Right cardiac atrium (tissue), 5 donors: ENCODE measurements at regions of chr14 and their contacts with region 1.

Region 1: GRCh38 chr14:73295198-73295796 is 58.0 kb downstream of the PAPLN start:
- DNase-seq: no peak
- ATAC-seq: peak; percentile 31 to 37
- H3K4me3 ChIP-seq: no peak overlapping the region
- H3K27ac ChIP-seq: no peak overlapping the region
- H3K4me1 ChIP-seq: peaks cover 3% of the 10 kb centered on the region
- H3K27me3 ChIP-seq: no peaks in the 10 kb centered on the region

Region 2: DNA sequence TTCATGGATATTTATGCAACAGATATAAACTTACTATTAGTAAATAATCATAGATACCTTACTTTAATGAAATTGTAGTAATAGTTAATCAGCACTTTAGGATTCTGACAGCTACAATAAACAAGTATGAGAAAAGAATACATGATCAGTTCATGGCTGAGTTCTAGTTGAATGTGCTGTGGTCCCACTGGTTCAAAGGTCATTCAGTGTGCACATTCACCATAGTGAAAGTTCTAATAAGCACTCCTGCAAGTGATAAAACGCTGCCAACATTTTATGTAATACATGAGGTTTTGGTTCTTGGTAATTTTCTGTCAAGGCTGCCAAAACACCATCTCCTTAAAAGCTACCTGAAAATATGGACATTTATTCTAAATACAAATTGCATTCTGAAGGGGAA is 70.4 kb after region 1 on chr14:
- intact Hi-C with region 1: no loop called
- DNase-seq: no peak
- ATAC-seq: no peak
- H3K4me3 ChIP-seq: no peak overlapping the region
- H3K27ac ChIP-seq: no peak overlapping the region
- H3K4me1 ChIP-seq: no peaks in the 10 kb centered on the region
- H3K27me3 ChIP-seq: no peaks in the 10 kb centered on the region

Region 3: GRCh38 chr14:73467377-73467776 is 172.1 kb after region 1 on chr14:
- intact Hi-C with region 1: loop called in 3 of 4 experiments (anchors 5 kb)
- DNase-seq: peak in 1 of 3 donors; percentile 31
- ATAC-seq: no peak
- H3K4me3 ChIP-seq: no peak overlapping the region
- H3K27ac ChIP-seq: no peak overlapping the region
- H3K4me1 ChIP-seq: peaks cover 8% of the 10 kb centered on the region
- H3K27me3 ChIP-seq: no peaks in the 10 kb centered on the region

Region 4: GRCh38 chr14:73472185-73473114 is 177.2 kb after region 1 on chr14:
- intact Hi-C with region 1: loop called (anchors 5 kb)
- DNase-seq: no peak
- ATAC-seq: peak; percentile 62 to 74
- H3K4me3 ChIP-seq: no peak overlapping the region
- H3K27ac ChIP-seq: no peak overlapping the region
- H3K4me1 ChIP-seq: no peaks in the 10 kb centered on the region
- H3K27me3 ChIP-seq: no peaks in the 10 kb centered on the region

Region 5: DNA sequence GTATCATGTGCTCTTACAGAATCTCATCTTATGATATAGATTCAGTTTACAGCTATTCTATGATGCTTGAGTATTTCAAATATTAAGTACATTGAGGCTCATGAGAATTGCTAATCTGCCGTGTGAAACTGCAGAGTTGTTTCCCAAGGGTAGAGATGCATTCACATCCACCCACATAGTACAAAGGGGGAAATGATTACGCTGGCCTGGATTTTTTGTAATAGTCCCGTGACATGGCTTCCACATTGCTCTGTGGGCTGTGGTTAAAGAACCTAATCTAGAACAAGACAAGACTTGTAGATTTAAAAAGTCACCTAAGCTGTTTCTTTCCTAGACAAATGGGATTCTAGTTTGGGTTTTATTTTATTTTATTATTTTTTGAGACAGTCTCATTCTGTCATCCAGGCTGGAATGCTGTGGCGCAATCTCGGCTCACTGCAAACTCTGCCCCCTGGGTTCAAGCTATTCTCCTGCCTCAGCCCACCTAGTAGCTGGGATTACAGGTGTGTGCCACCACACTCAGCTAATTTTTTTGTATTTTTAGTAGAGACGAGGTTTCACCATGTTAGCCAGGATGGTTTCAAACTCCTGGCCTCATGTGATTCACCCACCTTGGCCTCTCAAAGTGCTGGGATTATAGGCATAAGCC is 182.4 kb after region 1 on chr14:
- intact Hi-C with region 1: loop called in 3 of 4 experiments (anchors 5 kb)
- DNase-seq: no peak
- ATAC-seq: peak in 1 of 2 donors; percentile 45
- H3K4me3 ChIP-seq: no peak overlapping the region
- H3K27ac ChIP-seq: no peak overlapping the region
- H3K4me1 ChIP-seq: no peaks in the 10 kb centered on the region
- H3K27me3 ChIP-seq: no peaks in the 10 kb centered on the region